Transverse colon (tissue), 4 donors: ENCODE measurements at regions of chr6 and their contacts with region 1.

Region 1: DNA sequence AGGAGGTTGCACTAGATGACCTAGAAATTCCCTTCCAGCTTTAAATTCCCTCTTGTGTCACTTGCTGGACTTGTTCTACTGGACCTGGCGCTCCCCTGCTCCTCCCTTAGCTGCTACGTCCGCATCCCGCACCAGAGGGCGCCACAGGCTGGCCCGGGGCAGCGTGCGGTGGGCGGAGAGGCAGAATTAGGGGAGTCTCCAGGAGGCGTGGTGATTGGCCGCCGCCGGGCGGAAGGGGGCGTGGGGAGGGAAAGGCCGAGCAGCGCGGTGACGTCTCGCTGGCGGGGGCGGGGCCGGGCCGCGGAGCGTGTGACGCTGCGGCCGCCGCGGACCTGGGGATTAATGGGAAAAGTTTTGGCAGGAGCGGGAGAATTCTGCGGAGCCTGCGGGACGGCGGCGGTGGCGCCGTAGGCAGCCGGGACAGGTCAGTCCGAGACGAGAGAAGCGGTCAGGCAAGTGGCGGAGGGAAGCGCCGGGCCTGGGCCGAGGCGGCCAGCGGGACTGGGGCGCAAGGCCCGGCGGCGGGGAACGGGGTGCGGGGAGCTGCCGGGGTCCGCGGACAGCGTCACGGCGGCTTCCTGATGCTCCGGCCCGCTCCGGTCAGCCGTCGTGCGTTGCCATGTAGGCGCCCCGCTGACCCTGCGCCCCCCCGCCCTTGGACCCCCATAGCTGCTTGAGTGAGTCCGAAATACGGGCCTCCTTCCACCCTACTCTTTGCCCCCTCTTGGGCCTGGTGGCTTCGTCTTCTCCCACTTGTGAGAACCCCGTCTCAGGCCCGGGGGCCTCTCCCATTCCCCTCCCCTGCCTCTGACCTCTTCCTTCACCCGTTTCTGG is at the start of gene PPARD:
- DNase-seq: peak; percentile 99
- H3K4me3 ChIP-seq: peak within 1 kb of the TSS; percentile 80 to 99 (median 94)
- H3K27ac ChIP-seq: peak within 1 kb of the TSS; percentile 88 to 96 (median 90)
- H3K4me1 ChIP-seq: peaks cover 4 to 30% (median 13%) of the 10 kb centered on the region in 4 donors
- H3K27me3 ChIP-seq: peaks cover 2% of the 10 kb centered on the region
- CTCF ChIP-seq: peak; percentile 95 to 99 (median 97)
- EP300 ChIP-seq: no peak
- POLR2A ChIP-seq: peak; percentile 81
- total RNA-seq, gene PPARD: 19.8 to 110 (median 29.3) TPM

Region 2: GRCh38 chr6:35496841-35497570 is 154.5 kb after region 1 on chr6 and contains the start of gene TEAD3:
- in situ Hi-C with region 1: no loop called
- intact Hi-C with region 1: loop called (anchors 1 kb)
- DNase-seq: peak; percentile 74
- H3K4me3 ChIP-seq: peak within 1 kb of the TSS; percentile 64 to 98 (median 94)
- H3K27ac ChIP-seq: peak within 1 kb of the TSS; percentile 94 to 99 (median 98)
- H3K4me1 ChIP-seq: peaks cover 9 to 47% (median 41%) of the 10 kb centered on the region in 4 donors
- H3K27me3 ChIP-seq: peaks cover 11% of the 10 kb centered on the region
- CTCF ChIP-seq: peak in 2 of 5 experiments; percentile 15 to 22
- EP300 ChIP-seq: no peak
- POLR2A ChIP-seq: no peak
- total RNA-seq, gene TEAD3: 23.0 to 67.7 (median 25.3) TPM

Region 3: DNA sequence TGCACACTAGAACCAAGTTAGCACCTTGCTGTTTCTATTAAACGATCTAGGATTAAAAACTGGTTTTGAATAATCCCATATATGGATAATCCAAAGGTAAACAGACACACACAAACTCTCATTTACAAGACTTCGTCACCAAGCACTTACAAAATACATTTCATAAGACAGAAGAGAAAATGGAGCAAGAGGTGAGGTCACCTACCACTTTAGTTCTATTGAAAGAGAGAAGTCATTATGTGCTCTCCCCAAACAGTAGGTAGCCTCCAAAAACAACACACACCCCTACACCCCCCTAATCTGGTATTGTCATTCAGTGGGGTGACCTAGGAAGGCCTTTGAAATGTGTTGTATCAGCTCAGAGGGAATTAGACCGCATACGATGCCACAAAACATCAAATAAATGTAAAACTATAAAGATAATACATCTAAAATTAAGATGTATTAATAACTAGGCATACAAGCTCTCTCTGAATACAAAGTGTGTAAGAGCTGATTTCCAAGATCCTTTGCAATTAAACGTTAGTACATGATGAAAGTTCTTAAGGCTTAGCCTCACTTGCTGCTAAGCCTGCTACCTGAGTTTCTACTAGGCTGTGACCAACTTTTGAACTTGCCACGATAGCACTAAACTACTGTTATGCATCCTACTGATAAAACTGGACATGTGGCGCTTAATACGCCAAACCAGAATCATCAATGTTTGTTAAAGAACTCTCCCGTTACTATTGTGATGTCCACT is 576.8 kb after region 1 on chr6:
- in situ Hi-C with region 1: no loop called
- intact Hi-C with region 1: no loop called
- DNase-seq: no peak
- H3K4me3 ChIP-seq: peak overlapping the region in 3 of 4 donors; percentile 94 to 98 (median 98)
- H3K27ac ChIP-seq: peak overlapping the region; percentile 88 to 96 (median 92)
- H3K4me1 ChIP-seq: peaks cover 7 to 47% (median 37%) of the 10 kb centered on the region in 4 donors
- H3K27me3 ChIP-seq: no peaks in the 10 kb centered on the region
- CTCF ChIP-seq: no peak
- EP300 ChIP-seq: no peak
- POLR2A ChIP-seq: no peak